ENCODE measurements at regions of chr20 and their contacts with region 1.

Region 1: GRCh38 chr20:561437-562231 is 18.0 kb upstream of the CSNK2A1 start:
- DNase-seq: no peak
- ATAC-seq: peak; percentile 93
- H3K4me3 ChIP-seq: no peak overlapping the region
- H3K27ac ChIP-seq: no peak overlapping the region
- H3K4me1 ChIP-seq: no peaks in the 10 kb centered on the region
- H3K27me3 ChIP-seq: no peaks in the 10 kb centered on the region; a peak in 1 of 4 replicates
- CTCF ChIP-seq: peak; percentile 95 to 99 (median 99); a peak in 5 of 6 replicates
- EP300 ChIP-seq: no peak
- POLR2A ChIP-seq: no peak
- RAD21 ChIP-seq: peak; percentile 94

Region 2: DNA sequence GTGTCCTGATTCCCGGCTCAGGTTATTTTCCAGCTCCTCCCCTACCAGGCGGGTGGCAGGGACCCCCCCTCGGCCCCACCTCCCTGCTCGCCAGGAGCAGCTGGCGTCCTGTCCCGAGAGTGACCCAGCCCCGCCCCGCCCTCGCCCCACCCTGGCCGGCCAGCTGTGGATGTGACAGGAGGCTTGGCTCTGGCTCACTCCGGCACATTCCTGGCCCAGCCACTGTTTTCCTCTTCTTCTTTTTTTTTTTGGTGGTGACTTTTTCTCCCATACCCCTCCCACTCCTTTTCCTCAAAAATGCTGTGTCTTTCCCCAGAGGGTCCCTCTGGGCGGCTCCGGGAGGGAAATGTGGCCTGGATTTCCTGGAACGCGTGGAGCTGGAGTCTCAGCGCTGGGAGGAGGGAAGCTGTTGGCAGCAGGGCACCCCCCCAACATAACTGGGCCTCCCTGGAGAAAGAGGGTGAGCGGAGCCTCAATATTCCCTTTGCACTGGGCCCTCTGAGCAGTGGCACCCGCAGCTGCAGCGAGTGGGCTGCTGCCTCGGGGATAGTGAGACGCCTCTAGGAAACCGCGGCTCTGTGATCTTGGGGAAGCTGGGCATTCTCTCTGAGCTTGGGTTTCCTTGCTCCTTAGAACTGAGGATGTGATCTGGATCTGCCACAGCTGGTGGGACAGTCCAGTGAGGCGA is 10.3 kb after region 1 on chr20:
- CTCF ChIA-PET with region 1: interaction called, 13 read pairs
- POLR2A ChIA-PET with region 1: no interaction called
- RAD21 ChIA-PET with region 1: no interaction called
- SMC1A ChIA-PET with region 1: interaction called, 4 read pairs
- in situ Hi-C with region 1: no loop called
- intact Hi-C with region 1: no loop called
- DNase-seq: no peak
- ATAC-seq: no peak
- H3K4me3 ChIP-seq: no peak overlapping the region
- H3K27ac ChIP-seq: no peak overlapping the region
- H3K4me1 ChIP-seq: no peaks in the 10 kb centered on the region
- H3K27me3 ChIP-seq: peaks cover 0 to 9% of the 10 kb centered on the region in 2 experiments; a peak in 2 of 4 replicates
- CTCF ChIP-seq: no peak
- EP300 ChIP-seq: no peak
- POLR2A ChIP-seq: no peak
- RAD21 ChIP-seq: no peak

Region 3: GRCh38 chr20:740141-740540 is 178.5 kb after region 1 on chr20:
- CTCF ChIA-PET with region 1: interaction called, 23 read pairs
- POLR2A ChIA-PET with region 1: no interaction called
- RAD21 ChIA-PET with region 1: interaction called, 13 read pairs
- SMC1A ChIA-PET with region 1: interaction called, 6 read pairs
- in situ Hi-C with region 1: loop called (anchors 5 kb)
- intact Hi-C with region 1: loop called (anchors 1 kb)
- DNase-seq: no peak
- ATAC-seq: no peak
- H3K4me3 ChIP-seq: no peak overlapping the region
- H3K27ac ChIP-seq: no peak overlapping the region
- H3K4me1 ChIP-seq: no peaks in the 10 kb centered on the region
- H3K27me3 ChIP-seq: peaks cover 0 to 2% of the 10 kb centered on the region in 2 experiments; a peak in 1 of 4 replicates
- CTCF ChIP-seq: no peak
- EP300 ChIP-seq: no peak
- POLR2A ChIP-seq: no peak
- RAD21 ChIP-seq: no peak

Measured in GM12878 (cell line).